ENCODE measurements at regions of chr6 and their contacts with region 1.

Region 1: GRCh38 chr6:64479134-64479533 is 843.5 kb downstream of the PHF3 start:
- DNase-seq: no peak
- ATAC-seq: no peak

Region 2: GRCh38 chr6:64497634-64498033 is 18.5 kb after region 1 on chr6:
- intact Hi-C with region 1: loop called (anchors 2 kb)
- DNase-seq: no peak
- ATAC-seq: no peak

Region 3: GRCh38 chr6:64664480-64664879 is 185.3 kb after region 1 on chr6:
- intact Hi-C with region 1: no loop called
- DNase-seq: no peak
- ATAC-seq: peak; percentile 46

Region 4: DNA sequence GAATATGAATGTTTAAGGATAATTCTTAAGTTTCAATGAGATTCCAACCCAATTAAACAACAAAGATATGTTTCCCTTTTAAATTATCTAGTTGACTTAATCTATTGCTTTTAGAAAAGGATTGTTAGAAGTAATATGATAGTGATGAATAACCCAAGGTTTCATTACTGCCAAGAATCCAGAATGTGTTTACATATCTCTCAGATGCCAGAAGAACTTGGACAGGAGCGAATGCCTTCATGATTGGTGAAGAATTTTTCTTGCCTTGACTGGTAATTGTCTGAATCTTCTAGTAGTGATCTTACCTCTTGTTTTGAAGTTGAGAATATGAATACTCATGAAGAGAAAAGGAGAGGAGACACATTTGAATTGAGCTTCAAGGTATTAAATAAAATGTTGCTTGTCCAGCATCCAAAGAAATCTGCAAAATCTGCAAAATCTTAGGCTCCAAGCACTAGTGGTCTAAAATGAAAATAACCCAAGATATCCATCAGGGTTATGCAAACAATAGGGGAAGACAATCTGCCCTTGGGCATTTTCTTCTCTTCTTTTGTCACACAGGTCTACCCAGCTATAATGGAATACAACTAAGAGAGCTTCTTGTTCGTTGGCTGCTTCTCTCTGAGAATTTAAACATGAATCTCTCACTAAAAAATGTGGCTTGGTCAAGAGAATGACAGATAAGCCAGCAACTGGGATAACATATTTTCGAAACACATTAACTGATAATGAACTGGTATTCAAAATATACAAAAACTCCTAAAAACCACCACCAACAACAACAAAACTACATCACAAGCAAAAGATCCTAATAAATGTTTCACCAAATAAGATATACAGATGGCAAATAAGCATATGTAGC is 299.0 kb after region 1 on chr6:
- intact Hi-C with region 1: no loop called
- DNase-seq: no peak
- ATAC-seq: no peak

Measured in Right ventricle myocardium inferior (tissue), 1 donor.